AG04449 (cell line): ENCODE measurements at regions of chr5 and their contacts with region 1.

Region 1: GRCh38 chr5:159156426-159157238 is 52.7 kb downstream of the RNF145 start:
- DNase-seq: no peak
- H3K4me3 ChIP-seq: no peak overlapping the region
- CTCF ChIP-seq: peak; percentile 73

Region 2: DNA sequence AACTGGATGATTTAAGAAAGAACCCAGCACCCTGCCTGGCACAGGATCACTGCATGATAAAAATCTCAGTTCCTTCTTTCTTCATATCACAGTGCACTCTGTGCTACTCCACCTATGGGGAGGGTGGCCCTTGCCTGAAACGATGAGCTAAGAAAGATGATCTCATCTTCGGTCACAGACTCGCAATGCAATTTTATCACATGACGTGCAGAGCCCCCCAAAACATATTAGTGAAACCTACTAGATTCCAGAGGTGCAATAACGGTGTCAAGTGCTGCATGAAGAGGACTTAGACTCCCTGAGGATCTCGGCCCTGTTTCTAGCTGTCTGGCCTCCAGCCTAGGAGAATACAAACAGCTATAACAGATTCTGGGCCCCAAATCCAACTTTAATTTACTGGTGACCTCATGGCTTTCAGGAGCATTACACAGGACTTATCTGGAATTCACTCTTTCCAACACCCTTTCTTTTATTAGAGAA is 160.9 kb before region 1 on chr5:
- CTCF ChIA-PET with region 1: no interaction called
- POLR2A ChIA-PET with region 1: no interaction called
- DNase-seq: no peak
- H3K4me3 ChIP-seq: no peak overlapping the region
- CTCF ChIP-seq: no peak

Region 3: GRCh38 chr5:159133041-159133741 is 23.4 kb before region 1 on chr5:
- CTCF ChIA-PET with region 1: interaction called, 10 read pairs
- POLR2A ChIA-PET with region 1: no interaction called
- DNase-seq: peak; percentile 40
- H3K4me3 ChIP-seq: no peak overlapping the region
- CTCF ChIP-seq: peak; percentile 50

Region 4: DNA sequence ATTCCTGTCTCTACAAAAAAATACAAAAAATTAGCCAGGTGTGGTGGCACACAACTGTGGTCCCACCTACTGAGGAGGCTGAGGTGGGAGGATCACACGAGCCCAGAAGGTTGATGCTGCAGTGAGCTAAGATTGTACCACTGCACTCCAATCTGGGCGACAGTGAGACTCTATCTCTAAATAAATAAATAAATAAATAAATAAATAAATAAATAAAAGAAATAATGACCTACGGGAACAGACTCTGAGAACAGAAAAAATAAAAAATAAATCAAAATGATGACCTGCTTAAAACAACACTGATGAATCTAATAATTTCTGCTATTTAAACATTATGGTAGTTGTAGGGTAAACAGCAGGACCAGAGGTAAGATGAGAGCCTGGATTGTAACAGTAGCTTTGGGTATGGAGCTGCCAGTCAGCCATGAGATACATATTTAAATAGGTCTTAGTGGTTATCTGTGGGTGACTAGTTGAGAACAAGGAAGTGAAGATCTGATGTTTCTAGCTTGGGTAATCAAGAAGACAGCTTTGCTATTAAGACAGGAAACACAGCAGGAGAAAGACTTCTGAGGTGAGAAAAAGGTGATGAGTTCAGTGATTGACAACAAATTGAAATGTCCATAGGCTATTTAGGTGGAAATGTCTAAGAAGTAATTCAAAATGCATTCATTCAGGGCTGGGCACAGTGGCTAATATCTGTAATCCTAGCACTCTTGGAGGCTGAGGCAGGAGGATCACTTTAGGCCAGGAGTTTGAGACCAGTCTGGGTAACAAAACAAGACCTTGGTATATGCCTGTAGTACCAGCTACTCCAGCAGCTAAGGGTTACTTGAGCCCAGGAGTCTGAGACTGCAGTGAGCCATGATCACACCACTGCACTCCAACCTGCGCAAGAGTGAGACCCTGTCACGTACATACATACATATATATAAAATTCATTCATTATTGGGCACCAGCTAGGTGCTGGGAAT is 41.7 kb after region 1 on chr5:
- CTCF ChIA-PET with region 1: interaction called, 16 read pairs
- POLR2A ChIA-PET with region 1: no interaction called
- DNase-seq: no peak
- H3K4me3 ChIP-seq: no peak overlapping the region
- CTCF ChIP-seq: no peak

Region 5: GRCh38 chr5:159262859-159263567 is 106.4 kb after region 1 on chr5 and contains the start of gene UBLCP1:
- CTCF ChIA-PET with region 1: interaction called, 25 read pairs
- POLR2A ChIA-PET with region 1: no interaction called
- DNase-seq: peak; percentile 5
- H3K4me3 ChIP-seq: peak within 1 kb of the TSS; percentile 99
- CTCF ChIP-seq: no peak

Region 6: GRCh38 chr5:159316519-159317383 is 160.1 kb after region 1 on chr5:
- CTCF ChIA-PET with region 1: interaction called, 97 read pairs
- POLR2A ChIA-PET with region 1: no interaction called
- DNase-seq: no peak
- H3K4me3 ChIP-seq: no peak overlapping the region
- CTCF ChIP-seq: peak; percentile 72